Caco-2 (cell line): ENCODE measurements at regions of chr19 and their contacts with region 1.

Region 1: DNA sequence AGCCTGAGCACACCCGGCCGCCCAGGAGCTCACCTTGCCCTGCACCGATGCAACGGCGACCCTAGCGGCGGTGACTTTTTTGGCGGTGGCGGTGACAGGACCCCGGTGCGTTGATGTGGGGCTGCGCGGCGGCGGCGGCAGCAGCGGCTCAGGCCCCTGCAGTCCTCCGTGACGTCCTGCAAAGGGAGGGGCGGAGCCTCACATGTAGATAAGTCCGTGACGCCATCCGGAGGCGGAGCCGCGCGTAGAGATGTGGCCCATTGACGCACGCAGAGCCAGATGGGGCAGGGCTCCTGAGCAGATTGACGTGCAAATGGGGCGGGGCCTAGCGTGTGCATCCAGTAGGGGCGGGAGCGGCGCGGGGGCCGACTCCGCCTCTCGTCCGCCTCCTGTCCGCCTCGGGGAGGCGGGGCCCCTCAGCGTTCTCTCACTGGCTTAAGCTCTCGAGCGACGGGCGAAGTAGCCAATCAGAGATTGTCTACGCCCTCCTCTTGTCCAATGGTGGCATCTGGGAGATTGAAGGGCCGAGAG is at the start of gene RAB3A:
- DNase-seq: peak; percentile 99
- H3K4me3 ChIP-seq: peak within 1 kb of the TSS; percentile 90
- H3K4me3 Mint-ChIP-seq: peak within 1 kb of the TSS; percentile 90
- H3K27ac Mint-ChIP-seq: peak within 1 kb of the TSS; percentile 87
- H3K4me1 ChIP-seq: peaks cover 5% of the 10 kb centered on the region; the same call in 1 of the 2 replicates
- H3K4me1 Mint-ChIP-seq: no peaks in the 10 kb centered on the region
- H3K27me3 ChIP-seq: no peaks in the 10 kb centered on the region
- H3K27me3 Mint-ChIP-seq: no peaks in the 10 kb centered on the region
- CTCF ChIP-seq: no peak
- total RNA-seq, gene RAB3A: 2.3 and 3.9 TPM in 2 replicates

Region 2: GRCh38 chr19:18173572-18174288 is 30.2 kb before region 1 on chr19 and contains the start of gene IFI30:
- CTCF ChIA-PET with region 1: no interaction called
- POLR2A ChIA-PET with region 1: no interaction called
- intact Hi-C with region 1: no loop called
- DNase-seq: peak; percentile 64 to 69
- H3K4me3 ChIP-seq: peak within 1 kb of the TSS; percentile 67
- H3K4me3 Mint-ChIP-seq: peak within 1 kb of the TSS; percentile 76
- H3K27ac Mint-ChIP-seq: no peak within 1 kb of the TSS
- H3K4me1 ChIP-seq: 0 out of 2 replicates have a peak, but pooled peaks cover 4% of the 10 kb centered on the region
- H3K4me1 Mint-ChIP-seq: no peaks in the 10 kb centered on the region
- H3K27me3 ChIP-seq: no peaks in the 10 kb centered on the region
- H3K27me3 Mint-ChIP-seq: no peaks in the 10 kb centered on the region
- CTCF ChIP-seq: no peak
- total RNA-seq, gene IFI30: 38.3 and 39.6 TPM in 2 replicates

Region 3: GRCh38 chr19:18192673-18193387 is 11.1 kb before region 1 on chr19 and contains the start of gene MPV17L2:
- CTCF ChIA-PET with region 1: interaction called, 13 read pairs
- POLR2A ChIA-PET with region 1: interaction called, 5 read pairs
- intact Hi-C with region 1: loop called (anchors 1 kb)
- DNase-seq: peak; percentile 98 to 99
- H3K4me3 ChIP-seq: peak within 1 kb of the TSS; percentile 77
- H3K4me3 Mint-ChIP-seq: peak within 1 kb of the TSS; percentile 76
- H3K27ac Mint-ChIP-seq: peak within 1 kb of the TSS; percentile 69
- H3K4me1 ChIP-seq: peaks cover 4% of the 10 kb centered on the region; the same call in 1 of the 2 replicates
- H3K4me1 Mint-ChIP-seq: no peaks in the 10 kb centered on the region
- H3K27me3 ChIP-seq: no peaks in the 10 kb centered on the region
- H3K27me3 Mint-ChIP-seq: no peaks in the 10 kb centered on the region
- CTCF ChIP-seq: no peak
- total RNA-seq, gene MPV17L2: 14.1 and 16.6 TPM in 2 replicates